ENCODE measurements at regions of chr6 and their contacts with region 1.

Region 1: DNA sequence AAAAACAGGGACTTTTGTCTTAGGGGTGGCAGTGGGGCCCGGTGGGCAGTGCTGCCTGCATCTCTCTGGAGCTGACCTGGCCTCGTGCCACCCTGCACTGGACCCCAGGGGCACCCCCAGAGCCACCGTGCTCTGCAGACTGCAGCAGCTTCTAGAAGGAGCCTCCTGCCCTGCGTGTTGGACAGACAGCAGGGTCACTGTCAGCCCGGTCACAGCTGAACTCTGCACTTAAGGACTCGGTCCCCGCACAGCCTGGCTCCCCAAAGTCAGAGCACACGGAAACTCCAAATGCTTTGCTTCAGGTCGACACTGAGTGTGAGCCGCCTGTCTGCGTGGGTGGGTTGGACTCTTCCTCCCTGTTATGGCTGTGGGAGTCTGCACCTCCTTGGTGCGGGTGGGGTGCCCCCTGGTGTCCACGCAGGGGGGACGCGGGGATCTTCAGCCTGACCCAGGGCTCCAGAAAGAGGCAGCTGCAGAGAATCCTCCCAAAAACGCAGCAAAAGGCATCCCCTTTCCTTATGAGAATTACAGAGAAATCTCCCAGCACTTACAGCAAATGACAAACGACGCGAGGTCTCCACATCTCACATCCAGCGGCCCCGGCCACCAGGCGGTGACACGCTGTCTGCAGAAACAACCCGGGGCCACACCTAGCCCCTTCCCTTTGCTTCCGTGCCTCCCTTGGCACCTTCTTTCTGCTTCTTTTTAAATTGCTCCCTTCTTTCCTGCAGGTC is 36.3 kb upstream of the DACT2 start:
- DNase-seq: peak; percentile 67 to 87 (median 86)
- ATAC-seq: peak; percentile 94 to 97
- H3K4me3 ChIP-seq: no peak overlapping the region
- H3K27ac ChIP-seq: no peak overlapping the region
- H3K4me1 ChIP-seq: no peaks in the 10 kb centered on the region
- H3K27me3 ChIP-seq: no peaks in the 10 kb centered on the region

Region 2: GRCh38 chr6:168150551-168151320 is 205.1 kb before region 1 on chr6:
- intact Hi-C with region 1: loop called in 2 of 4 experiments (anchors 2 to 5 kb)
- DNase-seq: no peak
- ATAC-seq: peak in 1 of 2 donors; percentile 49
- H3K4me3 ChIP-seq: no peak overlapping the region
- H3K27ac ChIP-seq: no peak overlapping the region
- H3K4me1 ChIP-seq: no peaks in the 10 kb centered on the region
- H3K27me3 ChIP-seq: no peaks in the 10 kb centered on the region

Region 3: DNA sequence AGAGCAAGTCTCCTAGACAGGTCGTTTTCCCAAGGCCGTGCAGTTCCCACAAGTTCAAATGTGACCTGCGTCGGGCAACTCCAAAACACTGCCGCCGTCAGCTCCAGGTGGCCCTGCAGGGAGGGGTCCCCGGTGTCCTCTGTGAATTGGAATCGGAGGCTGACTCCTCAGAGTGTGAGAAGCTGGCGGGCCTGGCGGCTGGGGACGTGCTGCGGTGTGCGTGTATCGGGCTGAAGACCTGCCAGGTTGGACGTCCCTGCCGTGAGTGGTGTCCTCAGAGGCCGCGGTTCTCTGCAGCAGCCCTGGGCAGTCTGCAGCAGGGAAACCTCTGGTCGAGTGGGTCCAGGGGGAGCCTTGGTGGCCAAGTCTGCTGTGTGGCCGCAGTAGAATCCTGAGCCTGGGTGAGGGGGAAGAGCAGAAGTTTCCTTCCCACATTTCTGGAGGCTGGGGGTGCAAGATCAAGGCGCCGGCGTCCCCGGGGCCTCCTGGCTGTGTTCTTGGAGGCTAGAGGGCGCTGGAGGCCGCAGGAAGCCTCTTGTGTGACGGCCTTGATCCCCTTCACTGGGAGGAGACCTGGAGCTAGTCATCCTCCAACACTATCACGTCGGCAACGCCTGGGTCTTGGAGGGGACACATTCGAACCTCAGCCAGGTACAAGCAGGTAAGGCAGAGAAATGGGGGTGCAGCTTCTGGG is 161.7 kb before region 1 on chr6:
- intact Hi-C with region 1: loop called in 1 of 4 experiments (anchors 10 kb)
- DNase-seq: peak in 1 of 3 donors; percentile 42
- ATAC-seq: no peak
- H3K4me3 ChIP-seq: no peak overlapping the region
- H3K27ac ChIP-seq: no peak overlapping the region
- H3K4me1 ChIP-seq: no peaks in the 10 kb centered on the region
- H3K27me3 ChIP-seq: no peaks in the 10 kb centered on the region